PC-3 (cell line): ENCODE measurements at regions of chr10 and their contacts with region 1.

Region 1: DNA sequence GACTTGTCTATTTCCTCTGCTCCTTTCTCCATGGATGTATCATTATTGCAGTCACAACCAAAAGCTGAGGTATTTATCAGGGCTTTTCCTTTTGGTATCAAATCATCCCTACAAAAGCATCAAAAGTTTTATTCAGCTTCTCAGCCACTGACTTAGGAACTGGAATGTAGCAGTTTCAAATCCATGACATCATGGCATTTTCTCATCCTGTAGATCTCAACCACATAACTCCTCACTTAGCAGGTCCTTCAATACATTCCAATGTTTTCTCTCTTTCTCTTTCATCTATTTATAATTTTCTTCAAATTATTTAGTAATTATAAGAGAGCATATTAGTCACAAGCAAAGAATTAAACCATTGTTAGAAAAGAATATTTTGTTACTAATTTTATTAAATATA is 537.4 kb upstream of the SORCS1 start:
- DNase-seq: peak; percentile 8
- ATAC-seq: peak; percentile 72
- H3K4me3 ChIP-seq: no peak overlapping the region
- H3K27ac ChIP-seq: peak overlapping the region; percentile 41; the same call in 1 of the 2 replicates
- H3K4me1 ChIP-seq: no peaks in the 10 kb centered on the region
- H3K27me3 ChIP-seq: no peaks in the 10 kb centered on the region
- CTCF ChIP-seq: no peak

Region 2: DNA sequence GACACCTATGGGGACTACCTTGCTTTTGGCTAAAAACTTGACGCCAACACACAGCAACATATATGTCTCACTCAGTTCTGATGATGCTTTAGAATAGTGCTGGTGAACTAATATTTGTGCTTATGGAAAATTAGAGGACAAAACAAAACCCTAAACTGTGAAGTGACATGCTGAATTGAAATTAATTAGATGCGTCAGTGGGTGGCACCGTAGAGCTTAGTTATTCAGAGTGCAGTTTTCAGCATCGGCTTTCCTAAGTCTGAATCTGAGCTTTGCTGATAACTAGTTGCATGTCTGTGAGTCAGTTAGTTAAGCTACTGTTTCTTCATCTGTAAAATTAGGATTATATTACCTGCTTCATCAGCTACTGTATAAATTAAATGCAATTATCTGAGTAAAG is 292.4 kb before region 1 on chr10:
- CTCF ChIA-PET with region 1: no interaction called
- POLR2A ChIA-PET with region 1: no interaction called
- intact Hi-C with region 1: loop called (anchors 10 kb)
- DNase-seq: peak; percentile 49
- ATAC-seq: peak; percentile 67
- H3K4me3 ChIP-seq: no peak overlapping the region
- H3K27ac ChIP-seq: no peak overlapping the region
- H3K4me1 ChIP-seq: no peaks in the 10 kb centered on the region
- H3K27me3 ChIP-seq: no peaks in the 10 kb centered on the region
- CTCF ChIP-seq: peak; percentile 61